ENCODE measurements at regions of chr3 and their contacts with region 1.

Region 1: GRCh38 chr3:69084326-69085167 is at the start of gene ARL6IP5:
- DNase-seq: peak; percentile 94
- H3K4me3 Mint-ChIP-seq: peak within 1 kb of the TSS; percentile 91
- H3K27ac Mint-ChIP-seq: peak within 1 kb of the TSS; percentile 98
- H3K4me1 Mint-ChIP-seq: peaks cover 61% of the 10 kb centered on the region
- H3K27me3 Mint-ChIP-seq: no peaks in the 10 kb centered on the region
- total RNA-seq, gene ARL6IP5: 179 to 182 TPM

Region 2: DNA sequence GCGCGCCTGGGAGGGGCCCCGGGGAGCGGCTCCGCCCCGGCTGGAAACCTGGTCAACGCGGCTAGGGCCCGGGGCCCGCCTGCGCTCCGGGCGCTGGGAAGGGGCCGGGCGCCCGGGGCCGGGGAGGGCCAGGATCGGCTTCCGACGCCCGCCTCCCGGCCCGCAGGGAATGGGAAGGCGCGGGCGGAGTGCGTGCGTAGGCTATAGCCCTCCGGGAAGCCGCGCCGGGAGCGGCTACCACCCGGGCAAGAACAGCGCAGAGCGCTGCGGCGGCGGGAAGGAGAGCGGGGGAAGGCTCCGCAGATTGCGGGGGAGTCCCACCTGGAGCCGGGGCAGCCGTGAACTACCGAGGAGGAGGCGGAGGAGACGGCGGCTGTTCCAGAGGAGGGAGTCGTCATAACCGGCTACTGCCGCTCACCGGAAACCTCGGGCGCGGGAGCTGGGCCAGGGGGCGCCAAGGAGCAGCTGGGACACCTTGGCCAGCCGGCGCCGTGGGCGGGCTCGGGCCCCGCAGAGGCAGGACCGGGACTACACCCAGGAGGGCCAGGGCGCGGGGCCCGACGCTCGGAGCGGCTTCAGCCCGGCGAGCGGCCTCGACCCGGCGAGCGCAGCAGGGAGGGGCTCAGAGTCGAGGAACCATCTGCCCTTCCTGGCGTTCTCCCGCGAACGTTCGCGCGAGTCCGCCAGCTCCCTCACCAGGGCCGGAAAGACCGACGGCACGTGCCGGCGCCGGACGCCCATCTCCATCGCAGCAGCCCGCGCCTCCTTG is 71.1 kb before region 1 on chr3 and contains the start of gene EOGT:
- CTCF ChIA-PET with region 1: interaction called, 8 read pairs
- POLR2A ChIA-PET with region 1: interaction called, 23 read pairs
- DNase-seq: peak; percentile 85
- H3K4me3 Mint-ChIP-seq: peak within 1 kb of the TSS; percentile 83
- H3K27ac Mint-ChIP-seq: peak within 1 kb of the TSS; percentile 76
- H3K4me1 Mint-ChIP-seq: peaks cover 41% of the 10 kb centered on the region
- H3K27me3 Mint-ChIP-seq: no peaks in the 10 kb centered on the region
- total RNA-seq, gene EOGT: 12.9 to 13.7 TPM

Region 3: DNA sequence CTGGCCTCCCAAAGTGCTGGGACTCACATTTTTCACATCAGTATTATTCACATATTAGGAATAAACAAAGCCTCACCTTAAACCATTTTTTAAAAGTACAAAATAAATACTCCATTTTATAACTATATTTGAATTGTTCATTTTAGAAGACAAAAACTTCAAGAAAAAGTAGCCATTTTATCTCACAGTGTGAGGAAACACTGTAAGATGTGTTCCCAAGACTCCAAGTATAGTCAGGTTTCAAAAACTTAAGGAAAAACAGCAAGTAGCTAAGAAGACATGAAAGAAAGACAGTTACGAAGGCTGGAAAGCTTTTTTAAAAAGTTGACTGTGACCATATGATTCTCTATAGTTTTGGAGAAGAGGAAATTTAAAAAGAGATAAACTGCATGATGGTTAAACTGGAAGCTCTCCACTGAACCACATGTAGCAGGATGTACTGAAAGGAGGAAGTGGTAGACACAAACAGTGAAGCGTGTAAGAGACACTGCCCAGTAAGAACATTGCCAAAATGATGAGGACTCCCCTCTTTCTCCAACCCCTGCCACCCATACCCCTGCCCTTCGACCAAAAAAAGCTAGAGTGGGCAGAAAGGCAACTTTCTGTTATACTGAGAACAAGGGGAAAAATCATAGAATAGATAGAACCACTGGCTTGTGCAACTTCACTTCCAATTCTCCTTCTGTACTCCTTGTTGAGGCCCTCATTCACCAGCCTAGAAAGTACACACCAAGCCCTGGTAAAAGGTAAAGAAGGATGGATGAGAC is 26.2 kb before region 1 on chr3:
- CTCF ChIA-PET with region 1: interaction called, 17 read pairs
- POLR2A ChIA-PET with region 1: interaction called, 305 read pairs
- DNase-seq: peak; percentile 31
- H3K4me3 Mint-ChIP-seq: peak overlapping the region; percentile 16
- H3K27ac Mint-ChIP-seq: peak overlapping the region; percentile 94
- H3K4me1 Mint-ChIP-seq: peaks cover 52% of the 10 kb centered on the region
- H3K27me3 Mint-ChIP-seq: no peaks in the 10 kb centered on the region

Region 4: DNA sequence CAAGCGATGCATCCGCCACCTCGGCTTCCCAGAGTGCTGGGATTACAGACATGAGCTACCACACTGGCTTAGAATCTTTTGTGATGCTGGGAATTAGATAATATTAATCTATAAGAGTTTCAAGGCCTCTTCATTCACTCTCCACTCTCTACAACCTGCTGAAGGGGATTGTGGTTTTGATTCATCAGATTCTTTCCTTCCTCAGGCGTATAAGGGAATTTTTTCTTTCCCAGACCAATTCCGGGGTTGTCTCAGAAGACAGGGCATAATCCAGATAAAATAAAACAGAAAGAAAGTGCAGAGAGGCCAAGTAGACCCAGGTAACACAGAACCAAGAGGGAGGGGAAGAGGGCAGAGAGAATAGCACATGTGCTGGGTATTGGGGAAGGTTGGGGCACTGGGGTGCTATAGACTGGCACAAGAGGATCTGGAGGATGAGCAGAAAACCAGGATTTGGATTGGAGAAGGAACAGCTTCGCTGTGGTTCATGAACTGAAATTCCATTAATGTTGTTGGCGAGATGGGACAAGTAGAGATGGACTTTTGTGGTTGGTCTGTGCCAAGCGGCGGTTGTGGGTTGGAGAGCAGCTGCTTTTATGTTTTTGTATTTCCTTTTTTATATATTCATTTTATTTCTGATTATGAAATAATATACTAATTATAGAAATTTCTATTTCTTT is 13.0 kb after region 1 on chr3:
- CTCF ChIA-PET with region 1: interaction called, 15 read pairs
- POLR2A ChIA-PET with region 1: interaction called, 145 read pairs
- DNase-seq: no peak
- H3K4me3 Mint-ChIP-seq: no peak overlapping the region
- H3K27ac Mint-ChIP-seq: peak overlapping the region; percentile 17
- H3K4me1 Mint-ChIP-seq: peaks cover 68% of the 10 kb centered on the region
- H3K27me3 Mint-ChIP-seq: no peaks in the 10 kb centered on the region

Region 5: DNA sequence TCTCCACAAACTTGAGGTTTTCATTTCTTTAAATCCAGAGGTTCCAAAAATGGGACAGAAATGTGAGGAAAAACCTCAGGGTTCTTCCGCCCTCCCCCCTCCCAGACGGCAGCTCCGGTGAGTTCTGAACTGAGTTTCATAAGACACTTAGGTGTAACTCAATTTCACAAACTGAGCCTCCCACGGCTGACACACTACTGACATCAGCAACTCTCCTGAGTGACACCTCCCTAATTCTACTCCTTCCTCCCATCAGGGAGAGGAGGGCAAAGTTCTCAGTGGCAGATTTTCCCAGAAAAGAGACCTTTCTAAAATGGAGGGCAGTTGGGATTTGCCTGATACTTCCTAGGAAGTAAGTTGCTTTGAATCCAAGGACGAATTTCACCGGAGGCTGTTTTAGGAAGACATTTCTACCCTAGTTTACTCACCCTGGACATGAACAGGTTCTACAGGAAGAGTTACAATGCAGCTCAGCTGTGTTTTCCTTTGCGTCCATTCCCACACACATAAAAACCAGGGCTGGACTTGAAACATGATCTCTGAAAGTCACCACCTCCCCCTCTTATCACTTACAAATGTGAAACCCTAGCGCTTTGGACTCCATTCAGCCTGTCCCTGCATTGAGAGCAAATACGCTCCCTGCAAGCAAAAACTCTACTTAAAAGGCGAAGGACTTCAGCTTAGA is 116.0 kb after region 1 on chr3:
- CTCF ChIA-PET with region 1: no interaction called
- POLR2A ChIA-PET with region 1: interaction called, 20 read pairs
- DNase-seq: peak; percentile 68
- H3K4me3 Mint-ChIP-seq: peak overlapping the region; percentile 85
- H3K27ac Mint-ChIP-seq: peak overlapping the region; percentile 97
- H3K4me1 Mint-ChIP-seq: peaks cover 69% of the 10 kb centered on the region
- H3K27me3 Mint-ChIP-seq: no peaks in the 10 kb centered on the region